Right lobe of liver (tissue), 6 donors: ENCODE measurements at regions of chr12 and their contacts with region 1.

Region 1: GRCh38 chr12:104207416-104208210 is 8.0 kb upstream of the TXNRD1 start:
- DNase-seq: no peak
- ATAC-seq: no peak
- H3K4me3 ChIP-seq: no peak overlapping the region
- H3K27ac ChIP-seq: no peak overlapping the region
- H3K4me1 ChIP-seq: no peaks in the 10 kb centered on the region
- H3K27me3 ChIP-seq: no peaks in the 10 kb centered on the region
- CTCF ChIP-seq: no peak
- POLR2A ChIP-seq: no peak

Region 2: GRCh38 chr12:104286538-104287482 is 79.2 kb after region 1 on chr12:
- intact Hi-C with region 1: no loop called
- DNase-seq: peak; percentile 90 to 95 (median 93)
- ATAC-seq: peak; percentile 81 to 89 (median 84)
- H3K4me3 ChIP-seq: peak overlapping the region; percentile 64 to 90 (median 68)
- H3K27ac ChIP-seq: peak overlapping the region; percentile 91 to 93 (median 93)
- H3K4me1 ChIP-seq: peaks cover 0 to 26% (median 10%) of the 10 kb centered on the region in 4 donors
- H3K27me3 ChIP-seq: no peaks in the 10 kb centered on the region
- CTCF ChIP-seq: peak in 1 of 4 donors; percentile 9
- POLR2A ChIP-seq: peak; percentile 84

Region 3: GRCh38 chr12:104352106-104352713 is 144.6 kb after region 1 on chr12:
- intact Hi-C with region 1: loop called (anchors 5 kb)
- DNase-seq: no peak
- ATAC-seq: peak in 2 of 4 donors; percentile 28 to 45
- H3K4me3 ChIP-seq: no peak overlapping the region
- H3K27ac ChIP-seq: no peak overlapping the region
- H3K4me1 ChIP-seq: no peaks in the 10 kb centered on the region
- H3K27me3 ChIP-seq: no peaks in the 10 kb centered on the region
- CTCF ChIP-seq: no peak
- POLR2A ChIP-seq: no peak

Region 4: DNA sequence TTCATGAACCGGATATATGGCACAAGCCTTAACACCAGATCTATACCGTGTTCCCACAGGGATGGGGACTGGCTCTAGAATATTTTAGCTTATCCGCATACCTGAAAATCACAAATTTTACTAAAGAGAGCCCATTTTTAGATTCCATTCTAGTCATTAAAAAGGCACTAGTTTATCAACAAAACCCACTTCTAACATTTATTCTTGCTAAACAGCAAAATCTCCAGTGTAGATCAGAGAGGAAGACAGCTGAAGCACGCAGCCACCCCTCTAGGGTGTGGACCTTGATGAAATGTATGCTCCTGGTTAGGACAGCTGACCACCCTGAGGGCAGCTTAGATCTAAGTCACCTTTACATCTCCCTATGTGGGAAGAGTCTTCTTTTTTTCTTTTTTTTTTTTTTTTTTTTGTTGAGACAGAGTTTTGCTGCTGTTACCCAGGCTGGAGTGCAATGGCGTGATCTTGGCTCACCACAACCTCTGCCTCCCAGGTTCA is 158.4 kb after region 1 on chr12:
- intact Hi-C with region 1: no loop called
- DNase-seq: peak in 1 of 3 donors; percentile 13
- ATAC-seq: no peak
- H3K4me3 ChIP-seq: no peak overlapping the region
- H3K27ac ChIP-seq: no peak overlapping the region
- H3K4me1 ChIP-seq: no peaks in the 10 kb centered on the region
- H3K27me3 ChIP-seq: no peaks in the 10 kb centered on the region
- CTCF ChIP-seq: no peak
- POLR2A ChIP-seq: no peak